ENCODE measurements at regions of chr1 and their contacts with region 1.

Region 1: DNA sequence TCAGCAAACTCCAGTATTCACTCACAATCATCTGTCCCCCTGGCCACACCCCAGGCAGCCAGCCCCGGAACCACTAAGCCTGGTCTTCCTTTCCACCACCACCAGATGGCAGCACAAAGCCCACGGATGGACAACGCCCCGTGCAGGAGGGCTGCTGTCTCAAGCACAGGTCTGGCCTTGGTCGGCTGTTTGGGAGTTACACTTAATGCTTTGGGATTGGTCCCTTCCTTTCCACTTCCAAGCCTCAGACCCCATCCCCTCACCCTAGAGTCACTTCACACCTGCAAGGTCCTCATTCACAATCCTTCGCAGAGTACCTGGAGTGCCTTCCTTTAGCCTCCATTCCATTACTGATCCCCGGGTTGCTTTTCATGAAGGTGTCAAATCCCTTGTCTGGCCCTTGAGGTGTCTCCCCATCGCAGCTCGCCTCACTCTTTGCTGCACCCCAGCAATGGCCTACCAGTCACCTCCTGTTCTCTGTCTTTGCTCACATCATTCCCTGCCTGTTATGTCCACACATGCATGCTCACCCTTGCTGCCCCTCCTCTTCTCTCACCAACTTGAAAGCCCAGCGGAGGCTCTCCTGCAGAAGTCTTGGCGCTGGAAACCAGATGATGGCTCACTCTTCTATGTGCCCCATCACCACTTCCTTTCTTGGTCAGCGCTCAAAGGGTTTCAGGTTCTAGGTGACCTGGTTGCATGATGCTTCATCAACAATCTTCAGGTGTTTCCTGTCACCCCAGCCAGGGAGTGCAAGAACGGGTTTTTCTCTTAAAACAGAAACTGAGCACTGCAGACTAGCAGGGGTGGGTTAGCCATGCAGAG is 24.9 kb upstream of the KCNA2 start:
- DNase-seq: peak; percentile 87
- ATAC-seq: peak; percentile 78
- H3K4me3 Mint-ChIP-seq: no peak overlapping the region
- H3K27ac Mint-ChIP-seq: no peak overlapping the region
- H3K4me1 Mint-ChIP-seq: peaks cover 60% of the 10 kb centered on the region
- H3K27me3 Mint-ChIP-seq: no peaks in the 10 kb centered on the region

Region 2: GRCh38 chr1:110619412-110620249 is 11.4 kb before region 1 on chr1:
- POLR2A ChIA-PET with region 1: interaction called, 34 read pairs
- DNase-seq: peak; percentile 97
- ATAC-seq: peak; percentile 88
- H3K4me3 Mint-ChIP-seq: peak overlapping the region; percentile 86
- H3K27ac Mint-ChIP-seq: peak overlapping the region; percentile 90
- H3K4me1 Mint-ChIP-seq: peaks cover 27% of the 10 kb centered on the region
- H3K27me3 Mint-ChIP-seq: peaks cover 3% of the 10 kb centered on the region

Region 3: GRCh38 chr1:110645821-110646735 is 15.0 kb after region 1 on chr1:
- POLR2A ChIA-PET with region 1: interaction called, 76 read pairs
- DNase-seq: no peak
- ATAC-seq: no peak
- H3K4me3 Mint-ChIP-seq: peak overlapping the region; percentile 6
- H3K27ac Mint-ChIP-seq: peak overlapping the region; percentile 43
- H3K4me1 Mint-ChIP-seq: peaks cover 38% of the 10 kb centered on the region
- H3K27me3 Mint-ChIP-seq: no peaks in the 10 kb centered on the region

Region 4: DNA sequence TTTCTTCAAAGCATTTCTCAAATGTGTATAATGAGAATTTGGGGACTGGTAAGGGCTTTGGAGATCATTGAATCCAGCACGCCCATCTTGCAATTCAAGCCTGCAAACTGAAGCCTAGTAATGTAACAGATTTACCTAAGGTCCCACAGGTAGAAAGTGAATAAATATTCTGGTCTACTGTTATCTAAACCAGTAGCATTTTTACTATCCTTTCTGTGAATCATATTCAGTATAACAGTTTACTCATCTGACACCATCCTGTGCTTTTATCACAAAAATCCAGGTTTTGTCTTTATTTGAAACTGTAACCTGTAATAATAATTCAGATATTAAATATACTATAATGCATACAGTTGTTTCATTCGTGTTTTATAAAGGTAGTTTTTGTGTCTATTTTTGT is 26.3 kb after region 1 on chr1:
- POLR2A ChIA-PET with region 1: no interaction called
- DNase-seq: no peak
- ATAC-seq: no peak
- H3K4me3 Mint-ChIP-seq: no peak overlapping the region
- H3K27ac Mint-ChIP-seq: no peak overlapping the region
- H3K4me1 Mint-ChIP-seq: peaks cover 8% of the 10 kb centered on the region
- H3K27me3 Mint-ChIP-seq: no peaks in the 10 kb centered on the region

Region 5: GRCh38 chr1:110668549-110668948 is 37.5 kb after region 1 on chr1:
- POLR2A ChIA-PET with region 1: interaction called, 68 read pairs
- DNase-seq: no peak
- ATAC-seq: peak; percentile 25
- H3K4me3 Mint-ChIP-seq: peak overlapping the region; percentile 84
- H3K27ac Mint-ChIP-seq: peak overlapping the region; percentile 90
- H3K4me1 Mint-ChIP-seq: peaks cover 38% of the 10 kb centered on the region
- H3K27me3 Mint-ChIP-seq: no peaks in the 10 kb centered on the region

Region 6: DNA sequence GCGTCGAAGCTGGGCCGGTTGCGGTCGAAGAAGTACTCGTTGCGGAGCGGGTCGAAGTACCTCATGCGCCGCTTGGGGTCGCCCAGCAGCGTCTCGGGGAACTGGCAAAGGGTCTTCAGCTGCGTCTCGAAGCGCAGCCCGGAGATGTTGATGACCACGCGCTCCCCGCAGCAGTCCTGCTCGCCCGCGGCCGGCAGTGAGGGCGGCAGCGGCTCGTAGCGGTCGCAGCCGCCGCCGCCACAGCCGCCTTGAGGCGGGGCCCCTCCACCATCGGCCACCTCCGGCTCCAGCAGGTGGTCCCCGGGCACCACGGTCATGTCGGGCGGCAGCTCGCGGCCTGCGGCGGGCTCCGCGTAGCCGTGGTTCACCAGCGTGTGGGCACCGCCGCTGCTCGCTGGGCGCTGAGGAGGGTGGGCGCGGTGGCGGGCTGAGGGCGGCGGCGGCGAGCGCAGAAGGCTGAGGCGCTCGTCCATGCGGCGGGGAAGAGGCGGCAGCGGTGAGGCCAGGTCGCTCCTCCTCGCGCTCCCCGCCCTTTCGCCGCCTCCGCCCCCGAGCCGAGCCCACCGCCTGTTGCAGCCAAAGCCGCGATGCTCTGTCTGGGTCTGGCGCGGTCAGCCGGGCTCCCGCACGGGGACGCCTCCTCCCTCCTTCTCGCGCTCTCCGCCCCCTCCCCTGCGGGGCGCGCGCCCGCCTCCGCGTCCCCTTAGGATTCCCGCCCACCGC is 43.4 kb after region 1 on chr1 and contains the start of gene KCNA3:
- POLR2A ChIA-PET with region 1: interaction called, 68 read pairs
- DNase-seq: peak; percentile 82
- ATAC-seq: peak; percentile 35
- H3K4me3 Mint-ChIP-seq: peak within 1 kb of the TSS; percentile 100
- H3K27ac Mint-ChIP-seq: peak within 1 kb of the TSS; percentile 99
- H3K4me1 Mint-ChIP-seq: peaks cover 31% of the 10 kb centered on the region
- H3K27me3 Mint-ChIP-seq: no peaks in the 10 kb centered on the region
- total RNA-seq, gene KCNA3: 68.4 to 74.0 TPM

Region 7: GRCh38 chr1:110727246-110727645 is 96.2 kb after region 1 on chr1:
- POLR2A ChIA-PET with region 1: no interaction called
- DNase-seq: no peak
- ATAC-seq: no peak
- H3K4me3 Mint-ChIP-seq: peak overlapping the region; percentile 76
- H3K27ac Mint-ChIP-seq: peak overlapping the region; percentile 76
- H3K4me1 Mint-ChIP-seq: peaks cover 27% of the 10 kb centered on the region
- H3K27me3 Mint-ChIP-seq: no peaks in the 10 kb centered on the region

Measured in activated naive CD8-positive, alpha-beta T cell treated with anti-CD3 and anti-CD28 coated beads, Interleukin-2, amount 10 ng/mL, durations not matched to agents 7 days and 5 days (primary cell).